Ovary (tissue), 10 donors: ENCODE measurements at regions of chr2 and their contacts with region 1.

Region 1: GRCh38 chr2:66574701-66575624 is 140.0 kb downstream of the MEIS1 start:
- DNase-seq: peak; percentile 76 to 85 (median 83)
- H3K4me3 ChIP-seq: peak overlapping the region; percentile 70
- H3K27ac ChIP-seq: peak overlapping the region in 1 of 2 donors; percentile 83
- H3K4me1 ChIP-seq: peaks cover 3% of the 10 kb centered on the region
- H3K27me3 ChIP-seq: no peaks in the 10 kb centered on the region
- CTCF ChIP-seq: peak; percentile 14 to 58 (median 48)
- EP300 ChIP-seq: peak; percentile 12
- POLR2A ChIP-seq: no peak

Region 2: DNA sequence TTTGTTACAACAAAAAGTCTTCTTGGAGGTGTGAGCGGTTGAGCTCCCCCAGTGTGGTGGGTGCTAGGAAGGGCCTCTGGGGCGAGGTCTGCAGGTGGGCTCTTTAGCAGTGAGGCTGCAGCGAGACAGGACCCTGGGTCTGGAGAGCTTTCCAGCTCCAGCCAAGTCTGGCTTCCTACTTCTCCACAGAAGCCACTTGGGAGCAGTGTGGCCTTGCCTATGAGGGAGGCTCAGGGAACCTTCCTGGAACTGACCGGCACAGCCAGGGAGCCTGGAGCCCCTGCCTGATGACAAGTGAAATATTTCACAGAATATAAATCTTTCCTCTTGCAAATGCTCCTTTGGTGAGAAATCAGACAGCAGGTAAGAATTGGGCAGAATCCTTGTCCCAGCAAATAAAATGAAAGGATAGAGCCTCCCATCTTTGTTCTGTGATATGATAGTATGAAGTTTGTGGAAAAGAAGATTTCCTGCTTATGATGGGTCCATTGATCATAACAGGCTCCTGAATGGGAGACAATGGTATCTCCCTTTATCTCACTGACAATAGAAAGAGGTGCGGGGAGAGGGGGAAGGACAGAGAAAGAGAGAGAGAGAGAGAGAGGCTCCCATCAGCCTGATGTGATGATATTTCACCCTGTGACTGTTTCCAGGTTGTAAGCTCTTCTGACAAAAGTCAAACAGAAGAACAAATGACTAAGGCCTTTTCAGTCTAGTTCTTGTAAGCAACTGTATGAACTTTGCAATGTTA is 852.8 kb before region 1 on chr2:
- intact Hi-C with region 1: loop called in 1 of 4 experiments (anchors 10 kb)
- DNase-seq: peak; percentile 55 to 73 (median 61)
- H3K4me3 ChIP-seq: no peak overlapping the region
- H3K27ac ChIP-seq: no peak overlapping the region
- H3K4me1 ChIP-seq: no peaks in the 10 kb centered on the region
- H3K27me3 ChIP-seq: no peaks in the 10 kb centered on the region
- CTCF ChIP-seq: peak in 2 of 3 donors; percentile 29 to 36
- EP300 ChIP-seq: no peak
- POLR2A ChIP-seq: no peak

Region 3: GRCh38 chr2:66439812-66440542 is 135.0 kb before region 1 on chr2:
- intact Hi-C with region 1: loop called (anchors 2 to 5 kb)
- DNase-seq: peak in 4 of 5 donors; percentile 38 to 52 (median 44)
- H3K4me3 ChIP-seq: peak overlapping the region; percentile 80
- H3K27ac ChIP-seq: peak overlapping the region; percentile 89 to 93
- H3K4me1 ChIP-seq: peaks cover 2% of the 10 kb centered on the region
- H3K27me3 ChIP-seq: no peaks in the 10 kb centered on the region
- CTCF ChIP-seq: no peak
- EP300 ChIP-seq: no peak
- POLR2A ChIP-seq: no peak

Region 4: DNA sequence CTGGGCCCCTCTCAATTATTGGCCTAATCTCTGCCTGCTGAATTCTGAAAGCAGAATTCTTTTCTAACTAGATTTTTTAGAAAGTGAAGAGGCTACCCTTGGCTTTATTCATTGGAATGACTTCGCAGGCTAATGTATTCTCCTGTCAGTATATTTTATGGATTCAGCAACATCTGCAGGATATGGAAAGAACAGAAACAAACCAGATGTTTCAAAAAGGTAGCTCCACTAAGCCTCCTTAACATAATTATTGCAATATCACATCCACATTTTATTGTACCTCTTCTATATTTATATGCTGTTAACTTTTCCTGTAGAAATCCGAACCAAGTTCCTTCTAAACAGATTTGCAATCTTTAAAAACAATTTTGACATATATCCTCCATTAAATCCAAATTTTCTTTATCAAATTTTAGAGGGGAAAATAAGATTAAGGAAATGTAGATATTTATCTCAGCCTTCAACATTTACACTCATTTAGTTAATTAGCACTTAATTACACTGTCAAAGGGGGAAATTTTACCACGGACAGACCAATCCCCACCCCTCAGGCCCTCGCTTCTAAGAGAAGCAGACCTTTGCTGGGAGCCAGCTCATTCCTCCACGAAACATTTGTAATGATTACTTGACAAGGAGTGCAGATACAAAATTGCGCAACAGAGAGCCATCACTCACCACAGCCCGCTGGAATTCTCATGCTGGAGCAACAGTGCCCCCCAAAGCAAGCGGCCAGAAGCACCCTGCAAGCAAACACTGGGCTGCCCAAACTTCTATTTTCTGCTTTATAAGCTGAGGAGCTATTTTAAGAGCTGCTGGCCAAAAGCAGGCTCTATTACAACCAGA is 1075.5 kb after region 1 on chr2:
- intact Hi-C with region 1: loop called in 1 of 4 experiments (anchors 10 kb)
- DNase-seq: peak; percentile 77 to 88 (median 84)
- H3K4me3 ChIP-seq: no peak overlapping the region
- H3K27ac ChIP-seq: no peak overlapping the region
- H3K4me1 ChIP-seq: peaks cover 10% of the 10 kb centered on the region
- H3K27me3 ChIP-seq: no peaks in the 10 kb centered on the region
- CTCF ChIP-seq: peak; percentile 32 to 70 (median 43)
- EP300 ChIP-seq: no peak
- POLR2A ChIP-seq: no peak

Region 5: GRCh38 chr2:67840460-67841068 is 1265.6 kb after region 1 on chr2:
- intact Hi-C with region 1: loop called in 1 of 4 experiments (anchors 10 kb)
- DNase-seq: peak; percentile 56 to 78 (median 59)
- H3K4me3 ChIP-seq: no peak overlapping the region
- H3K27ac ChIP-seq: no peak overlapping the region
- H3K4me1 ChIP-seq: peaks cover 2% of the 10 kb centered on the region
- H3K27me3 ChIP-seq: no peaks in the 10 kb centered on the region
- CTCF ChIP-seq: peak in 2 of 3 donors; percentile 53 to 60
- EP300 ChIP-seq: no peak
- POLR2A ChIP-seq: no peak